ENCODE measurements at regions of chr15 and their contacts with region 1.

Region 1: DNA sequence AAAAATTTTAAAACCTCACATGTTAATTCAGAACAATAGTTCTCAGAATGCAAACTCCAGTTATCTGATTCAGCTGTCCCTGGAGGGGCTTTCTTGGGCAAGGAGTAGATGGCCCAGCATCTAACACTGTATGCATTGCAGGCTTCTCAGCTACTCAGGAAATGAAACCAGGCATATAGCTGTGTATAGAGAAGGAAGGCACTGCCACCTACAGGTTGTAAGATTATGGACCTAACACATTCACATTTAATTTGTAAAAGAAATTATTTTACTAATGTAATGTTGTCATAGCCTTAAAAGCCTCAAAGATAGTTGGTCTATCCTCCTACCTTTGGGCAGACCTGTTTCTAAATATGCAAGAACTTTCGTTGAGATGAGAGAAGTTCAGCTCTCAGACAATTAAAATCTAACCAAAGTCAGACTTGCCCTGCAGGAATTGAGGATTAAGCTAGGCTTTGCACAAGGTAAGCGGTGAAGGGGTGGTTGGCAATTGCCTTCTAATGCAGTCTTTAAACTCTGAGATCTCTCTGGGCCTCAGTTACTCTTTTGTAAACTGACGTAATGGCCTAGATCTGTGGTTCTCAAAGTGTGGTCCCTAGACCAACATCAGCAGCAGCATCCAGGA is 132.8 kb upstream of the SLC24A5 start:
- H3K4me3 ChIP-seq: no peak overlapping the region
- H3K27ac ChIP-seq: no peak overlapping the region
- H3K4me1 ChIP-seq: no peaks in the 10 kb centered on the region
- CTCF ChIP-seq: peak; percentile 25; the same call in 1 of the 2 replicates

Region 2: GRCh38 chr15:47196057-47196456 is 792.0 kb before region 1 on chr15:
- CTCF ChIA-PET with region 1: interaction called, 36 read pairs
- POLR2A ChIA-PET with region 1: no interaction called
- H3K4me3 ChIP-seq: no peak overlapping the region
- H3K27ac ChIP-seq: no peak overlapping the region
- H3K4me1 ChIP-seq: no peaks in the 10 kb centered on the region; the same call in 1 of the 2 replicates
- CTCF ChIP-seq: peak; percentile 53

Region 3: DNA sequence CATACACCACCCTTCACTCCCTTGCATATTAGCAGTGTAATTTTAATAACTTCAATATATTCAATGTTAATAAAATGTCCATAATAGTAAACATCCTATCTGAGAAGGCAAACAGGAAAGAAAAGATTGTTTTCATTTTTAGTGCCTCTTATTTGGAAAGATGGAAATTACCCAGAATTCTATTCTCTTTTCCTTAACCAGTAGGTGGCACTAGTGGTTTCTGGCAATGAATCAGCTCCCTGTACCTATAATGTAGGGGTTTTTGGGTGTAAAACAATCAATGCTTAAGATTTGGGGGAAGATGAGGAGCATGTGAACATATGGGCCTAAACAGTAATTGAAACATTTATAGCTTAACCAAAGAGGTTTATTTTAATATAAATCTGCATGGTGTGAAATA is 276.4 kb before region 1 on chr15:
- CTCF ChIA-PET with region 1: interaction called, 23 read pairs
- POLR2A ChIA-PET with region 1: no interaction called
- H3K4me3 ChIP-seq: no peak overlapping the region
- H3K27ac ChIP-seq: no peak overlapping the region
- H3K4me1 ChIP-seq: peaks cover 3% of the 10 kb centered on the region; the same call in 1 of the 2 replicates
- CTCF ChIP-seq: no peak

Region 4: DNA sequence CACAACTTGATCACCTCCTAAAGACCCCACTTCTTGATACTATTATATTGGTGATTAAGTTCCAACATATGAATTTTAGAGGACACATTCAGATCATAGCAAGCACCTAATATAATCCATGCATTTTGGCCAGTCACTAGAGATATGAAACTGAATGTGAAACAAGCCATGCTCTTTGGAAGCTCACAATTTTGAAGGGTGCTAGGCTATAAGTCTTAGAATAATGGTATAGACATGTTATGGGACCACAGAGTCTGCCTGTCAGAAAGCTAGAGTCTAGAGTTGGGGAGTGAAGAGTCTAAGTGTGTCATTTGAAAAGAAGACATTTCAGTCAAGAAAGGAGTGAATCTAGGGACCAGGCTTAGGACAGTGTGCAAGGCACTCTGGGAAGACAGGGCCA is 53.7 kb before region 1 on chr15:
- CTCF ChIA-PET with region 1: no interaction called
- POLR2A ChIA-PET with region 1: no interaction called
- H3K4me3 ChIP-seq: no peak overlapping the region
- H3K27ac ChIP-seq: no peak overlapping the region
- H3K4me1 ChIP-seq: no peaks in the 10 kb centered on the region
- CTCF ChIP-seq: no peak

Region 5: GRCh38 chr15:48084759-48085590 is 97.0 kb after region 1 on chr15:
- CTCF ChIA-PET with region 1: interaction called, 15 read pairs
- POLR2A ChIA-PET with region 1: no interaction called
- H3K4me3 ChIP-seq: no peak overlapping the region
- H3K27ac ChIP-seq: no peak overlapping the region
- H3K4me1 ChIP-seq: no peaks in the 10 kb centered on the region
- CTCF ChIP-seq: peak; percentile 30; the same call in 1 of the 2 replicates

Measured in HEK293 (cell line).